ENCODE measurements at regions of chr20 and their contacts with region 1.

Region 1: GRCh38 chr20:20824924-20825584 is 112.6 kb upstream of the RALGAPA2 start:
- ATAC-seq: peak in 6 of 8 experiments; percentile 11 to 58 (median 45)
- H3K4me3 ChIP-seq: no peak overlapping the region
- H3K27ac ChIP-seq: no peak overlapping the region
- H3K4me1 ChIP-seq: peaks cover 0 to 4% of the 10 kb centered on the region in 2 donors

Region 2: GRCh38 chr20:20664795-20665589 is 160.1 kb before region 1 on chr20:
- in situ Hi-C with region 1: loop called in 4 of 9 experiments (anchors 10 to 25 kb)
- ATAC-seq: peak in 6 of 8 experiments; percentile 58 to 94 (median 82)
- H3K4me3 ChIP-seq: no peak overlapping the region
- H3K27ac ChIP-seq: no peak overlapping the region
- H3K4me1 ChIP-seq: peaks cover 0 to 16% of the 10 kb centered on the region in 2 donors

Region 3: DNA sequence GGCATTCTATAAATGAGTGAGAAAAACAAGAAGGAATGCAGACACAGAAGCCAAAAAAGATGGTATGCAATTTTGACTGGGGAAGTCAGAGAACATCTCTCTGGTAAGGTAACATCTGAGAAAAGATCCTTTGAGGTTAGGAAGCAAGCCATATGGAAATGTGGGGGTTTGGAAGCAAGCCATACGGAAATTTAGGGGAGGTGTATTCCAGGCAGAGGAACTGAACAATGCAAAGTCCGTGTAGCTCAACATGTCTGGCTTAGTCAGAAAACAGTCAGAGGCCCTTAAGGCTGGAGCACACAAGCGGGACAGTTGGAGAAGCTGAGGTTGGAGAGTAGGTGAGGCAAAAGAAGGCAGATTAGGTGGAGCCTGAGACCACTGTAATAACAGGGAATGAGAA is 147.9 kb before region 1 on chr20:
- in situ Hi-C with region 1: loop called in 4 of 9 experiments (anchors 10 to 25 kb)
- ATAC-seq: peak in 3 of 8 experiments; percentile 94 to 98 (median 98)
- H3K4me3 ChIP-seq: no peak overlapping the region
- H3K27ac ChIP-seq: no peak overlapping the region
- H3K4me1 ChIP-seq: no peaks in the 10 kb centered on the region

Region 4: DNA sequence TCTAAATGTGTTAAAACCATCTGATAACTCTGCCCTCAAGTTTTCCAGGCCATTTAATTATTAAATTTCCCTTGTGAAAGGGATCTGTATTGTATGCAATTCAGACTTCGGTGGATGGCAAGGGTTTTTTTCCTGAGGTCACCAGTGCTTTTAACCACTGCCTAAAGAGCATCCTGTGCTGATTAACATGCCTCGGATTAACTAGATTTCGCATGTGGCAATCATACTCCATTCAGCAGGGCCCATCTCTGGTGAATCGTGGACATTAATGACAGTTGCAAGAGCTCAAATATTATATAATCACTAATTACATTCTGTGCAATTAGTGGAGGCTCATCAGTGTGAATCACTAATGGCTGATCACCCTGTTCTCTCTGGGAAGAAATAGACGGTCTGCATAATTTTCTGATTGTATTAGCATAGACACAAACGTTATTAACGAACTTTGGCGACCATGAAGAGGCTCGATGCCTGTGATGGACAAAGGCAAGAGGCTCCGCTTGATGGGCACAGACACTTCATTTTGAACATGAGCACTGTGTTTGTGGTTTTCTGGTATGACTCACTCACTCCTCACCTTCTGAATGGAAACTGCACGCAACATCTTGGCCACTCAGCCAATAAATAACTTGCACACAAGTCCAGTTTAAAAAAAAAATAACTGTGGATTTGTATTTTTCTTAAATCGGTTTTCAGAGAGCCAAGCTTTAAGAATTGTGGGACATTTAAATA is 249.7 kb after region 1 on chr20:
- in situ Hi-C with region 1: no loop called
- ATAC-seq: peak in 2 of 8 experiments; percentile 70 to 76
- H3K4me3 ChIP-seq: no peak overlapping the region
- H3K27ac ChIP-seq: no peak overlapping the region
- H3K4me1 ChIP-seq: no peaks in the 10 kb centered on the region

Region 5: DNA sequence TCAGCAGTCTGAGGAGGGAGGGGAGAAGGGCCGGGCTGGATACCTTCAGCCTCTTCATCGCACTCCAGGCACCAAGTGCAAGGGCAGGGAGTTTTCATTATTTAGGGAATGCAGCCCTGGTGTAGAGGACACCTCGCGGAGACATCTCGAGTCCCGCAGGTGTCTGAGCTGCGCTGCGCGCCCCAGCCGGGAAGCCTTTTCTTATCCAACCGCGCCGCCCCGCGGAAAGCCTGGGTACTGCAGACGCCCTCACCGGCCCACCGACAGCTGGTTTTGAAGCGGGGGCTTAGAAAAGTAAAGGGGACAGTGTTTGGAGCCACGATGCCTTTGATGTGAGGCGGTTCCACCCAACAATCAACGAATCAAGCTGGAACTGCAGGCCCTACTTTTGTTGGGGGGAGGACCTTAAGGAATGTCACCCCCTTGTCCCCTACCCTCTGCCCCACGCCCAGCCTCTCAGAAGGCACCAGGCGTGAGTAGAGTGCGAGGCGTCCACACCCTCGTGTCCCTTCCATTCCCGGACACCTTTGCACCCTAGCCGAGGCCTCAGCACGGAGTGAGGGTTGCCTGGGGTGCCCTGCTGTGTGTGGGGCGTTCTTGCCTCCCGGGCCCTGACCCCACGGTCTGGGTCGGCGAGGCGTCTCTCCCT is 680.2 kb after region 1 on chr20:
- in situ Hi-C with region 1: loop called in 1 of 9 experiments (anchors 25 kb)
- ATAC-seq: peak; percentile 11 to 62 (median 48)
- H3K4me3 ChIP-seq: peak overlapping the region in 2 of 5 donors; percentile 31 to 34
- H3K27ac ChIP-seq: no peak overlapping the region
- H3K4me1 ChIP-seq: peaks cover 0 to 16% of the 10 kb centered on the region in 2 donors